Motor neuron (in vitro differentiated cells): ENCODE measurements at regions of chrX and their contacts with region 1.

Region 1: GRCh38 chrX:110450050-110450449 is 91.4 kb downstream of the RTL9 start:
- ATAC-seq: peak; percentile 88 to 99 (median 94)
- H3K4me3 ChIP-seq: no peak overlapping the region
- H3K27ac ChIP-seq: no peak overlapping the region
- H3K4me1 ChIP-seq: no peaks in the 10 kb centered on the region

Region 2: DNA sequence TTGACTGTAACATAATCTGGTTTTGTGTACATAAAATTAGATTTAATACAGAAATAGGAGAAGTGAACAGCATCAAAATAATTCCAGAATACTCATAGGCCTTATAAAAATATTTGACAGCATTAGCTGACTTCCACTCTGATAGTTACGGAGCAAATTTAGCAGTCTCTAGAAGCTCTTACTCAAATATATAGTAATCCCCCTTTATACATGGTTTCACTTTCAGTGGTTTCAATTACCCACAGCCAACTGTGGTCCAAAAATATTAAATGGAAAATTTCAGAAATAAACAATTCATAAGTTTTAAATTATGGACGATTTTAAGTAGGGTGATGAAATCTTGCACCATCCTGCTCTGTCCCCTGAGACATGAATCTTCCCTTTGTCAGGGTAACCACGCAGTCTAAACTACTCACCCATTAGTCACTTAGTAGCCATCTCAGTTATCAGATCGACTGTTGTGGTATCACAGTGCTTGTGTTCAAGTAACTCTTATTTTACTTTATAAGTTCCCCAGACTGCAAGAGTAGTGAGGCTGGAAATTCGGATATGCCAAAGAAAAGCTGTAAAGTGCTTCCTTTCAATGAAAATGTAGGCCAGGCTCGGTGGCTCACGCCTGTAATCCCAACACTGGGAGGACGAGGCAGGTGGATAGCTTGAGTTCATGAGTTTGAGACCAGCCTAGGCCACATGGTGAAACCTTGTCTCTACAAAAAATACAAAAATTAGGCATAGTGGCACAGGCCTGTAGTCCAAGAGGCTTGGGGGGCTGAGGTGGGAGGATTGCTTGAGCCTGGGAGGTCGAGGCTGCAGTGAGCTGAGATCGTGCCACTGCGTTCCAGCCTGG is 108.6 kb before region 1 on chrX:
- in situ Hi-C with region 1: no loop called
- ATAC-seq: peak in 4 of 8 experiments; percentile 28 to 78 (median 61)
- H3K4me3 ChIP-seq: no peak overlapping the region
- H3K27ac ChIP-seq: no peak overlapping the region
- H3K4me1 ChIP-seq: no peaks in the 10 kb centered on the region

Region 3: GRCh38 chrX:110588164-110588563 is 138.1 kb after region 1 on chrX:
- in situ Hi-C with region 1: no loop called
- ATAC-seq: peak in 1 of 8 experiments; percentile 15
- H3K4me3 ChIP-seq: no peak overlapping the region
- H3K27ac ChIP-seq: no peak overlapping the region
- H3K4me1 ChIP-seq: no peaks in the 10 kb centered on the region

Region 4: GRCh38 chrX:110665223-110666002 is 215.4 kb after region 1 on chrX:
- in situ Hi-C with region 1: loop called in 1 of 9 experiments (anchors 25 kb)
- ATAC-seq: peak in 5 of 8 experiments; percentile 29 to 84 (median 82)
- H3K4me3 ChIP-seq: no peak overlapping the region
- H3K27ac ChIP-seq: no peak overlapping the region
- H3K4me1 ChIP-seq: no peaks in the 10 kb centered on the region

Region 5: DNA sequence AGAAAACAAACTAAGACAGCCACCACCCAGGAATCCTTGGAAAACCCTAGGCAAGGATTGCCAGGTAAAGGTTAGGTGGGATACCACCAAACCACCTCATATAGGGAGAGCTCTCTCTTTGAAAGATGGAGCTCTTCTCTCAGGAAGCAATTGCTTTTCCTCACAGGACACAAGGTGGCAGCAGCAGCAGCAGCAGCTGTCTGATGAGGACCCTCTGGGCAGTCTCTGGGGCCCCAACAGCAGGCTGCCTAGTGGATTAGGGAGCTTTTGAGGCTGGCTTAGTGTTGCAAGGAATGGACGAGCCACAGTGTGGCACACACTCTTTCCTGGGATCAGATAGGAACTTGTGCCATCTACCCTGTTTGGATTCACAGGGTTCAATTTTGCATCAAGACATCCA is 386.9 kb after region 1 on chrX:
- in situ Hi-C with region 1: loop called in 6 of 9 experiments (anchors 10 to 25 kb)
- ATAC-seq: peak in 2 of 8 experiments; percentile 39 to 43
- H3K4me3 ChIP-seq: no peak overlapping the region
- H3K27ac ChIP-seq: no peak overlapping the region
- H3K4me1 ChIP-seq: peaks cover 0 to 2% of the 10 kb centered on the region in 2 donors

Region 6: DNA sequence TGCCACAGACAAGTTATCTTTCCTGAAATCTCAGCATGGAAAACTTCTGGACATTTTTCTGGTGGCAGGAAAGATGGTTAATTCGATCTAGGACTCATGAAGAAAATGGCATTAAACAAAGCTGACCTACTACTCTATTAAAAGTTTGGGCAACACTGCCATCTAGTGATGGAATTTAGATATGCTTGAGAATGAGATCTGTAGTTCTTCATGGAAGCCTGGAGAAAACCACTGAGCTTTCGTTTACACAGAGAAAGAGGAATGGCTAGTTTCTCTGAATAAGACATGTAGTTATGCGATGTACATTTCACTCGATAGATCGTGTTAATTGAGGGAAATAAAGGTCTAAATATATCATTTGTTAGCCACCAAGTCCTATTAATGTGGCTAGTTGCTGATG is 397.3 kb after region 1 on chrX:
- in situ Hi-C with region 1: loop called in 6 of 9 experiments (anchors 10 to 25 kb)
- ATAC-seq: peak; percentile 49 to 94 (median 69)
- H3K4me3 ChIP-seq: no peak overlapping the region
- H3K27ac ChIP-seq: no peak overlapping the region
- H3K4me1 ChIP-seq: no peaks in the 10 kb centered on the region